Gastrocnemius medialis (tissue), 4 donors: ENCODE measurements at regions of chr1 and their contacts with region 1.

Region 1: DNA sequence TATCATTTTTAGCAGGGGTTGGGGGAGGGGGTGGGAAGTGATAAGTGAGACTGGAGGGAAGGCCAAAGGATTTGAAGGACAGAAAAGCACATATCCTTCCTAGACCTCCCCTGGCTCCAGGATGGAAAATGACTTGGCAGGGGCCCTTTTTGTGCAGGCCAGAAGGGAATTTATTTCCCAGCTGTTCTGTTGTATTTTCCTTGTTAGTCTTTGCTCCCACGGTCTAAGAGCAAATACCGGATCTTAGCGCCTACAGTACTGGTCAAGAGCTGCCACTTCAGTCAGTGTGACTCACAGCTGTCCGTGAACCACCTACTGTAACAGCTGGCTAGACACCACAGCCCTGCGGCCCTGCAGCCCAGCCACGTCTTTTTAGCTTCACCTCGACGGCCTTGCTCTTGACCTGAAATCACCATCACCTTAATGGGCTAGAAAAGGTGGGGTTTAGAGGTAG is 51.0 kb upstream of the ERRFI1 start:
- DNase-seq: peak; percentile 52 to 77
- ATAC-seq: peak; percentile 92
- H3K4me3 ChIP-seq: no peak overlapping the region
- H3K27ac ChIP-seq: peak overlapping the region; percentile 69 to 83 (median 76)
- H3K4me1 ChIP-seq: peaks cover 25 to 27% of the 10 kb centered on the region in 2 donors
- H3K27me3 ChIP-seq: no peaks in the 10 kb centered on the region
- CTCF ChIP-seq: peak in 2 of 5 experiments; percentile 9 to 16
- POLR2A ChIP-seq: no peak

Region 2: GRCh38 chr1:8169364-8170058 is 92.4 kb after region 1 on chr1:
- in situ Hi-C with region 1: no loop called
- intact Hi-C with region 1: loop called (anchors 5 kb)
- DNase-seq: peak; percentile 71 to 74
- ATAC-seq: peak; percentile 85 to 90
- H3K4me3 ChIP-seq: no peak overlapping the region
- H3K27ac ChIP-seq: peak overlapping the region; percentile 52 to 79 (median 72)
- H3K4me1 ChIP-seq: peaks cover 28 to 40% of the 10 kb centered on the region in 2 donors
- H3K27me3 ChIP-seq: no peaks in the 10 kb centered on the region
- CTCF ChIP-seq: peak in 1 of 5 experiments; percentile 9
- POLR2A ChIP-seq: peak in 1 of 2 donors; percentile 25